ENCODE measurements at regions of chr20 and their contacts with region 1.

Region 1: GRCh38 chr20:49610701-49611538 is 43.0 kb upstream of the PTGIS start:
- DNase-seq: peak; percentile 90
- H3K4me3 ChIP-seq: peak overlapping the region; percentile 44
- H3K27ac ChIP-seq: no peak overlapping the region
- H3K4me1 ChIP-seq: peaks cover 15% of the 10 kb centered on the region
- CTCF ChIP-seq: peak; percentile 99

Region 2: DNA sequence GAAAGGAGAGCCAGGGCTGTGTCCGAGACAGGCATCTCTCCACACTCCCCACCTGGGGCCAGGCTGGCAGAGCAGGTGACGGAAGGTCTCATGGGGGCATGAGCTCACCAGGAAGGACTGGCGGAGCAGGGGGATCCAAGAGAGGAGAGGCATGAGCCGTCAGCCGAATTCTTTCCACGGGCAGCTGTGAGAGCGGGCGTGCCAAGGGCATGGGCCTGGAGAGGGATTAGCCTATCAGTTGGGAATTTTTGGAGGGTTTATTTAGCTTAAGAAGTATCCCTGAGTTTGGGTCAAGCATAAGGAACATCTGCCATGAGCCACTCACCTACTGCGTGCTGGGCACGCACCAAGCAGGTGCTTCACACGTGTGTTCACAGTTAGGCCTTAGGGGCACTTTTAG is 272.9 kb before region 1 on chr20:
- CTCF ChIA-PET with region 1: no interaction called
- POLR2A ChIA-PET with region 1: no interaction called
- intact Hi-C with region 1: loop called (anchors 2 kb)
- DNase-seq: no peak
- H3K4me3 ChIP-seq: no peak overlapping the region
- H3K27ac ChIP-seq: no peak overlapping the region
- H3K4me1 ChIP-seq: no peaks in the 10 kb centered on the region
- CTCF ChIP-seq: no peak

Region 3: DNA sequence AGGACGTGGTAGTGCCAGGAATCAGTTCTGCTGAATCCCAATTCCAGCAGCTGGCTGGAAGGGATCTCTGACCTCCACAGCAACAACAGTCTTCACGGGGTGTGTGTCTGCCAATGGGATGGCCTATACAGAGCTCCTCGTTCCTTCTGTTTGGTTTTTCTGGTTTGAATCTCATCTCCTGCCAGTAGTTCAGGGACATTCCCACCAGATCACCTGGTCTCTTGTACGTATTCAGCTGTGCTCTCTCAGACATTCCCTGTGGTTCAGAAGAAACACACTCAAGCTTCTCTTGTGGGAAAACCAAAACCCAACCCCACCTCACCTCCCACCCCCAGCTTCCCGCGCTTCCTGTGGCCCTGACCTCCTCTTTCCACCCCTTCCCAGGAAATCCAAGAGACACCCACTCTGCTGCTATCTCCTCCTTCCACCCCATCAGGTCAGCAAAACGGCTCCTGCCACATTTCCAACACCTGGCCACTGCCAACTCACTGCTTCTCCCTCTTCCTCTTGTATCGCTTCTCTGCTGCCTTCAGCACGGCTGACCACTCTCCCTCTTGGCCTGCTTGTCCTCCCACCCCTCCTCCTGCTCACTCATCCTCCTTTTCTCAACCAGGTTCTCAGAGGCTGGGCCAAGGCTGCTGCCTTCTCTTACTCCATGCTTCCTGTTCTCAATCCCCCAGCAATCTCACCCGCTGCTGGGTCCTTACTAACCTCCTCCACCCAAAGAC is 20.3 kb after region 1 on chr20:
- CTCF ChIA-PET with region 1: interaction called, 3 read pairs
- POLR2A ChIA-PET with region 1: interaction called, 5 read pairs
- intact Hi-C with region 1: loop called (anchors 1 kb)
- DNase-seq: peak; percentile 26
- H3K4me3 ChIP-seq: peak overlapping the region; percentile 59
- H3K27ac ChIP-seq: peak overlapping the region; percentile 91
- H3K4me1 ChIP-seq: peaks cover 97% of the 10 kb centered on the region
- CTCF ChIP-seq: no peak

Region 4: GRCh38 chr20:49797344-49797615 is 186.4 kb after region 1 on chr20:
- CTCF ChIA-PET with region 1: no interaction called
- POLR2A ChIA-PET with region 1: interaction called, 3 read pairs
- intact Hi-C with region 1: loop called (anchors 5 kb)
- DNase-seq: no peak
- H3K4me3 ChIP-seq: no peak overlapping the region
- H3K27ac ChIP-seq: no peak overlapping the region
- H3K4me1 ChIP-seq: peaks cover 31% of the 10 kb centered on the region
- CTCF ChIP-seq: no peak

Region 5: GRCh38 chr20:49846206-49846807 is 235.4 kb after region 1 on chr20:
- CTCF ChIA-PET with region 1: interaction called, 4 read pairs
- POLR2A ChIA-PET with region 1: interaction called, 6 read pairs
- intact Hi-C with region 1: loop called (anchors 1 kb)
- DNase-seq: peak; percentile 77
- H3K4me3 ChIP-seq: no peak overlapping the region
- H3K27ac ChIP-seq: no peak overlapping the region
- H3K4me1 ChIP-seq: no peaks in the 10 kb centered on the region
- CTCF ChIP-seq: peak; percentile 92

Region 6: DNA sequence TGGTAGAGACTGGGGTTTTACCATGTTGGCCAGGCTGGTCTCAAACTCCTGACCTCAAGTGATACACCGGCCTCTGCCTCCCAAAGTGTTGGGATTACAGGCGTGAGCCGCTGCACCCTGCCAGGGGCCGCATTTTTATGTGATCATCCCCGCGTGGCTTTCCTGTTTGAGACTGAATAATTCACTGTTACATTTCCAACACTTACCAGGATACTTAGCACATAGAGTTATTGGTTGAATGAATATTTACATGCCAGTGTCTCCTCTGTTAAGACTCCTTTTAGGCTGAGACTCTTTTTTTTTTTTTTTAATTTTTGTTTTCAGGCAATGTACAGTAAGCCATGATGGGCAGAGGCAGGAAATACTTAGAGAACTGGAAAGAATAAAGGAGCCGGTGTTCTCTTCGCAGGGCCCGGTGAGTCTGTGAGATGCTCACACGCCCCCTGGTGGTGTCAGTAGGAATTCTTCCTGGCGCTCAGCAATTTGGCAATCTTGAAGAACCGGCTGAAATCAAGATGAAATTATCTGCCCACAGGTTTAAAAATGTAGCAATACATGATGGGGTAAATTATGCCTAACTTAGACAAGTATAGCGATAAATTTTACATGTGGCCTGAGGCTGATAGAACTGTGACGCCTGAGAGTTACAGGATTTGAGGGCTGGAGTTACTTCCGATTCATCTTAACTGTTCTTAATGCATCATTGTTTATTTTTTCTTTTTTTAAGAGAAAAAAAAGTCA is 317.7 kb after region 1 on chr20:
- CTCF ChIA-PET with region 1: no interaction called
- POLR2A ChIA-PET with region 1: no interaction called
- intact Hi-C with region 1: loop called (anchors 2 kb)
- DNase-seq: peak; percentile 88
- H3K4me3 ChIP-seq: no peak overlapping the region
- H3K27ac ChIP-seq: no peak overlapping the region
- H3K4me1 ChIP-seq: peaks cover 13% of the 10 kb centered on the region
- CTCF ChIP-seq: peak; percentile 97